ENCODE measurements at regions of chr6 and their contacts with region 1.

Region 1: DNA sequence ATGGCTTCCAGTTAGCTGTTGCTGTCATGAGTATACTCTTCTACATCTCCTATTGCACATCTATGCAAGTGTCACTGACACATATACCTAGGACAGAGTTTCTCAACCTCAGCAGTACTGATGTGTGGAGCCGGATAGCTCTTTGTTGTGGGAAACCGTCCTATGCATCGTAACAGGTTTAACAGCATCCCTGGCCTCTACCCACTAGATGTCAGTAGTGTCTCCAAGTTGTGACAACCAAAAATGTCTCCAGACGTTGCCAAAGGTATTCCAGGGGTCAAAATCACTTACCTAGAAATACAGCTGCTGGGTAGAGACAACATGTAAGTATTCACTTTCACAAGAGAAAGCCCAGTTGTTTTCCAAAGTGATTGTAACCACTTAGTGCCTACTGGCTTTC is 637.6 kb downstream of the RNF144B start:
- DNase-seq: no peak

Region 2: DNA sequence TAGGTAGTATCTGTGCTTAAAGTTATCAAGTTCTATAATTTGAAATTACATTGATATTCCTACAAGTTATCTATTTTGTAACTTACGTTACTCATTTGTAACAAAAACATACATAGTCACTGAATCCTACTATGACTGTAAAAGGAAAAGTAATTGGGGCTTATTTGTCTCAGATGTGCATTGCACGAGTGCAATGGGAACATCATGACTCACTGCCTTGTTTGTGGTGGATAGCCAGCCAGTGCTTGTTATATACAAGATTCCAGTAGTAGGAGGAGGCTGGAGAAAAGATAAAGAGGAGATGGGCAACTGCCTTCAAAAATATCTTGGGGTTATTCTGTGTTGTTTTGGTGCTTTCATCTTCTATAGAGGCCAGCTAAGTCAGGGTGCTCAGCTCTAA is 473.5 kb before region 1 on chr6:
- intact Hi-C with region 1: no loop called
- DNase-seq: no peak

Region 3: GRCh38 chr6:19209214-19209613 is 184.5 kb after region 1 on chr6:
- intact Hi-C with region 1: loop called (anchors 5 kb)
- DNase-seq: no peak

Region 4: DNA sequence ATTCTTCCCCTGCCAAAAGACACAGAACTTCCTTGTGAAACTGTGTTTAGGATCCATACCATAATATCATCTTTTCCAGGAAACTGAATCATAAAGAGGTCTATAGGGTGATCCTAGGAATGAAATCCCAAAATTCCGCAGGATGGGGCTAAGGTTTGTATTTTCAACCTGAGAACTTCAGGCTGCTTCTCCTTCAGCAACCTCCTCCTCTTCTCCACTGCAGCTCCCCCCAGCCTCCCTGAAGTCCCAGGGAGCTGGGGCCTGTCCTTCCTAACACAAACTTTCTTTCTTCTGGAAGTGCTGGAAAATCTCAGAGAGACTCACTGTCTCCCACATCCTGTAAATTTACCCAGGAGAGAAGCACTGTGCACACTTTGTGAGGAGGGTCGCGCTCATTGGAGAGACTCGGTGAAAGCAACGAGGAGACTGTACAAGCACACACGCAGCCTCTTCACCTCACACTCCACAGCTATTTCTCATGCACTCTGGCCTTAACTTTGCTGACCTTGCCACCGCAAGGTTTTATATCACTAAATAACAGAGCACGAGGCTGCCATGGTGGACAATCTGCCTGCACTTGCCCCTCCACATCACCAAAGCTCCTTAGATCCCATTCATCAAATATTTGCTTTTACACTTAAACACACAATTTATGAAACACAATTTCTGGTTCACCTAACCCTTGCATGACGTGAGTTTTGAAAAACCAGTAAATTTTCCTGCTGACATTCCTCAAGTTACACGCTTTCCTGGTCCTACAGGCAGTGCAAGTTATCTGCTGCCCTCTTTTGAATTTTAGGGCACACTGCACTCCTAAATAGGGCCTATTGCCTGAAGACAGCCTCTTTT is 826.7 kb after region 1 on chr6:
- intact Hi-C with region 1: loop called (anchors 10 kb)
- DNase-seq: no peak

Measured in cardiac septum (tissue), 1 donor.